ENCODE measurements at regions of chr2 and their contacts with region 1.

Region 1: GRCh38 chr2:46967990-46968647 is 52.5 kb upstream of the MCFD2 start:
- DNase-seq: no peak
- ATAC-seq: no peak
- H3K4me3 ChIP-seq: no peak overlapping the region
- H3K27ac ChIP-seq: peak overlapping the region; percentile 92
- H3K4me1 ChIP-seq: peaks cover 97% of the 10 kb centered on the region
- H3K27me3 ChIP-seq: no peaks in the 10 kb centered on the region
- CTCF ChIP-seq: no peak
- EP300 ChIP-seq: no peak
- POLR2A ChIP-seq: no peak
- RAD21 ChIP-seq: no peak

Region 2: DNA sequence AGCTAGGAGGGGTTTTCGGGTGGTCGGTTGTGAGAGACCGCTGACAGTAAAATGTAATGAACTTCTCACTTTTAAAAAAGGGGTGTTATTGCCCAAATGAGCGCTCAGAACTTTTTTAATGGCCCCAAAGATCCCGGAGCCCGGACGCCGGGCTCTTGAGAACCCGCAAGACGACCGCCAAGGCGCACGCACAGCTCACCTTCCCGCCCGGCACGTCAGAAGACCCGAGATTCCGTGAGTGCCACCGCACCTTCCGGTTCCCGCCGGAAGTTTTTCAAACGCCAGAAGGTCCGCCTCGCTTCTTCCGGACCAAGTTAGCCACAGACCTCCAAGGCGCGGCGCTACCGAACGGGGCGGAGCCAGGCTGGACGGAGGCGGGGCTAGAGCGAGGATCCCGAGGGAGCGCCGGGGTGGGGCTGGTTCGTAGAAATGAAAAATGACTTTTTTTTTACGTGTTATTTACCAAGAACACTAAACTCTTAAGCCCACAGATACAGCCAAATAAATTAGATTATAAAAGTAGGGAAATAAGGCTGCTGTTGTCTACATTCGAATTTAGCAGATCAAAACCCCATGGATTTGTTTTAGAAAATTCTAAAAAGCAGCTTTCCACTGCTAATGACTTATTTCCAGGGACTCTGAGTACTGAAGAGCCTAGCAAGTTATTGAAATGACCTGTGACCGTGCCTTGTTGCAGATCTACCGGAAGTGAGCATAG is 1356.9 kb before region 1 on chr2 and contains the start of gene SRBD1:
- CTCF ChIA-PET with region 1: no interaction called
- POLR2A ChIA-PET with region 1: no interaction called
- in situ Hi-C with region 1: no loop called
- intact Hi-C with region 1: loop called (anchors 5 kb)
- DNase-seq: peak; percentile 95
- ATAC-seq: peak; percentile 98
- H3K4me3 ChIP-seq: peak within 1 kb of the TSS; percentile 71 to 78 (median 77)
- H3K27ac ChIP-seq: peak within 1 kb of the TSS; percentile 85
- H3K4me1 ChIP-seq: peaks cover 30% of the 10 kb centered on the region
- H3K27me3 ChIP-seq: no peaks in the 10 kb centered on the region; a peak in 1 of 5 replicates
- CTCF ChIP-seq: peak; percentile 44; the same call in 1 of the 2 replicates
- EP300 ChIP-seq: no peak
- POLR2A ChIP-seq: peak; percentile 84 to 96
- RAD21 ChIP-seq: no peak
- total RNA-seq, gene SRBD1: 23.9 and 32.8 TPM in 2 replicates

Region 3: GRCh38 chr2:46915811-46916630 is 52.1 kb before region 1 on chr2:
- CTCF ChIA-PET with region 1: no interaction called
- POLR2A ChIA-PET with region 1: interaction called, 8 read pairs
- in situ Hi-C with region 1: no loop called
- intact Hi-C with region 1: loop called (anchors 2 kb)
- DNase-seq: peak; percentile 96
- ATAC-seq: peak; percentile 88
- H3K4me3 ChIP-seq: peak overlapping the region; percentile 74 to 100 (median 75)
- H3K27ac ChIP-seq: peak overlapping the region; percentile 89
- H3K4me1 ChIP-seq: peaks cover 58% of the 10 kb centered on the region
- H3K27me3 ChIP-seq: no peaks in the 10 kb centered on the region; a peak in 1 of 5 replicates
- CTCF ChIP-seq: no peak
- EP300 ChIP-seq: peak in 1 of 2 experiments; percentile 26; a peak in 1 of 4 replicates
- POLR2A ChIP-seq: peak; percentile 79 to 88
- RAD21 ChIP-seq: no peak

Region 4: DNA sequence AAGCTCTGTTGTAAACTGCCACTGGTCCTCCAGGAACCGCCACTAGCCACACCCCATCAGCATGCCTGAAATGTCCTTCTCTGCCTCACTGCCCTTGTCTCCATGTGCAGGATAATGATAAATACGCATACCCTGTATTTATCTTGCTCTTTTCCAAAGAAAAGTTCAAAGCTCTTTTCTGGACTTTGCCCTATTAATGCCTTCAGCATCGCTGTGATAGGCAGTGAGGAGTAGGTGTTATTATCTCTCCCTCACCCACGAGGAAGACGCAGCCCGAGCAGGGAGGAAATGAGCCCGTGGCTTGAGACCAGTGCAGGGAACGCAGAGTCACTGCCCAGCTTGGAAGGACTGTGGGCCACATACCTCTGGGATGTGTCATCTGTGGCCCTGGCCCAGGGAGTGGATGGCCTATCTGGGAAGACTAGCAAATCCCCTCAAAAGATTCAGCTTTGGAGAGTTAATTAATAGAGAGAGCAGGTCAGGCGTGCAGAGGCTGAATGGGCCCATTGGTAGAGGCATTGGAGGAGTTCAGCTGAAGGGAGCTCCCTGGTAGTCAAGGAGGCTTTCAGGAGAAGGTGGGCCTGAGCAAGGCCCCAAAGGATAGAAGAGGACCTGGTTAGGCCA is 13.1 kb before region 1 on chr2:
- CTCF ChIA-PET with region 1: no interaction called
- POLR2A ChIA-PET with region 1: interaction called, 27 read pairs
- in situ Hi-C with region 1: no loop called
- intact Hi-C with region 1: loop called (anchors 1 kb)
- DNase-seq: peak; percentile 92
- ATAC-seq: peak; percentile 93
- H3K4me3 ChIP-seq: no peak overlapping the region
- H3K27ac ChIP-seq: peak overlapping the region; percentile 61
- H3K4me1 ChIP-seq: peaks cover 28% of the 10 kb centered on the region
- H3K27me3 ChIP-seq: no peaks in the 10 kb centered on the region
- CTCF ChIP-seq: no peak
- EP300 ChIP-seq: peak in 1 of 2 experiments; percentile 36; a peak in 1 of 4 replicates
- POLR2A ChIP-seq: no peak
- RAD21 ChIP-seq: peak; percentile 18; the same call in 1 of the 2 replicates

Region 5: GRCh38 chr2:46983065-46983801 is 15.1 kb after region 1 on chr2:
- CTCF ChIA-PET with region 1: no interaction called
- POLR2A ChIA-PET with region 1: interaction called, 11 read pairs
- in situ Hi-C with region 1: no loop called
- intact Hi-C with region 1: no loop called
- DNase-seq: no peak
- ATAC-seq: no peak
- H3K4me3 ChIP-seq: no peak overlapping the region
- H3K27ac ChIP-seq: no peak overlapping the region
- H3K4me1 ChIP-seq: peaks cover 38% of the 10 kb centered on the region
- H3K27me3 ChIP-seq: no peaks in the 10 kb centered on the region
- CTCF ChIP-seq: no peak
- EP300 ChIP-seq: no peak
- POLR2A ChIP-seq: no peak
- RAD21 ChIP-seq: no peak